ENCODE measurements at regions of chr1 and their contacts with region 1.

Region 1: GRCh38 chr1:228850141-228851100 is 115.1 kb downstream of the RHOU start:
- DNase-seq: peak in 2 of 3 donors; percentile 31 to 50
- ATAC-seq: peak; percentile 68
- H3K4me3 ChIP-seq: no peak overlapping the region
- H3K4me1 ChIP-seq: peaks cover 19% of the 10 kb centered on the region
- CTCF ChIP-seq: no peak

Region 2: DNA sequence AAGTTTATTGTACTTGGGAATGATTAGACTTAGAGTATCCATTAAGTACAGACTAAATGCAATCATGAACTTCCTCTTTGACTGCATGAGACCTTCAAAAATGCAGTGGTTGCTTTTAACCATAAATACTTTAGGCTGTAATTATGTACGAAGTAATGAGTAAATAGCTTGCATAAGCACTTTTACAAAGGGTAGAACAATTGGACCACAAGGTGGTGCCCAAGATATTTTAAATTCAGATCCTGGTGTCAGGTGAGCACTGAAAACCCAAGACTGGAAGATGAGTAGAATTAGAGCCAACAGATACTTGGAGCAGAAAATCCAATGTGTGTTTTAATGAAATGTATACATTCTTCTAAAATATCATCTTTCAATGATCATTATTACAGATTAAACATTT is 158.5 kb before region 1 on chr1:
- intact Hi-C with region 1: no loop called
- DNase-seq: peak in 1 of 3 donors; percentile 80
- ATAC-seq: peak; percentile 50
- H3K4me3 ChIP-seq: no peak overlapping the region
- H3K4me1 ChIP-seq: no peaks in the 10 kb centered on the region
- CTCF ChIP-seq: no peak

Region 3: GRCh38 chr1:228781161-228781808 is 69.1 kb before region 1 on chr1:
- intact Hi-C with region 1: no loop called
- DNase-seq: no peak
- ATAC-seq: no peak
- H3K4me3 ChIP-seq: no peak overlapping the region
- H3K4me1 ChIP-seq: peaks cover 15% of the 10 kb centered on the region
- CTCF ChIP-seq: no peak

Region 4: GRCh38 chr1:228938537-228938901 is 88.1 kb after region 1 on chr1:
- intact Hi-C with region 1: loop called in 1 of 2 experiments (anchors 10 kb)
- DNase-seq: no peak
- ATAC-seq: no peak
- H3K4me3 ChIP-seq: no peak overlapping the region
- H3K4me1 ChIP-seq: peaks cover 28% of the 10 kb centered on the region
- CTCF ChIP-seq: no peak

Region 5: GRCh38 chr1:228989992-228990827 is 139.8 kb after region 1 on chr1:
- intact Hi-C with region 1: no loop called
- DNase-seq: peak; percentile 44 to 62 (median 53)
- ATAC-seq: peak; percentile 63
- H3K4me3 ChIP-seq: no peak overlapping the region
- H3K4me1 ChIP-seq: no peaks in the 10 kb centered on the region
- CTCF ChIP-seq: no peak

Region 6: DNA sequence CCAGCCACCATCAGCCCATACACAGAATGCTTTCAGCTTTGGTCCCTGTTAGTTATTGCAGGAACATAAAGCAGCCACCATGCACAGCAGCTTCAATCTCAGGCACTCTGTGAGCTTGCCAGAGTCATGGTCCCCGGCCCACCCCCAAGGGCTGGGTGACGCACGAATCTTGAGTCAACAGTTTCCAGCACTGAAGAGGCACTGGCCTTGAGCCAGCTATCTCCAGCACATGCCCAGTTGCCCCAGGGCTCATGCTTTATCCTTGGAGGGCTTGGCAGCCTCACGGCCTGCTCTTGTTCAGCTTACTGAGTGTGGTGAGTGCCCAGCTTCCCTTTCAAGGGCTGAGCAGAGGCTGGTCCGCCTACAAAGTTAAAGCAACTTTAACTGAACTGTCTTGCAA is 219.7 kb after region 1 on chr1:
- intact Hi-C with region 1: no loop called
- DNase-seq: peak; percentile 61 to 64 (median 64)
- ATAC-seq: peak; percentile 58
- H3K4me3 ChIP-seq: no peak overlapping the region
- H3K4me1 ChIP-seq: no peaks in the 10 kb centered on the region
- CTCF ChIP-seq: no peak